Caco-2 (cell line): ENCODE measurements at regions of chr1 and their contacts with region 1.

Region 1: DNA sequence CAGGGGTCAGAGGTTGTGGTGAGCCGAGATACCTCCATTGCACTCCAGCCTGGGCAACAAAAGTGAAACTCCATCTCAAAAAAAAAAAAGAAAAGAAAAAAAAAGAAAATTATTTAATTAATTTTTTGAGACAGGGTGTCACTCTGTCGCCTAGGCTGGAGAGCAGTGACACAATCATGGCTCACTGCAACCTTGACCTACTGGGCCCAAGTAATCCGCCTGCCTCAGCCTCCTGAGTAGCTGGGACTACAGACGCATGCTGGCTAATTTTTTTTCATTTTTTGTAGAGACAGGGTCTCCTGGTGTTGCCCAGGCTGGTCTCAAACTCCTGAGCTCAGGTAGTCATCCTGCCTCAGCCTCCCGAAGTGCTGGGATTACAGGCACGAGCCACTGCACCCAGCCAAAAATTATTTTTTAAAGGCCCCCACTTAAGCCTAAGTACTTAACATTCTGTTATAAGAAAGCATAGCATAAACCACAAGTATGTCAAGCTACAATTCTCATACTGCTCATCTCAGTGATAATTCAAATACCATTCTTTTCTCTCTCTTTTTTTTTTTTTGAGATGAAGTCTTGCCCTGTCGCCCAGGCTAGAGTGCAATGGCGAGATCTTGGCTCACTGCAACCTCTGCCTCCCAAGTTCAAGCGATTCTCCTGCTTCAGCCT is 19.9 kb downstream of the NUCKS1 start:
- DNase-seq: no peak
- H3K4me3 ChIP-seq: no peak overlapping the region
- H3K4me3 Mint-ChIP-seq: no peak overlapping the region
- H3K27ac Mint-ChIP-seq: no peak overlapping the region
- H3K4me1 ChIP-seq: no peaks in the 10 kb centered on the region; the same call in 1 of the 2 replicates
- H3K4me1 Mint-ChIP-seq: peaks cover 7% of the 10 kb centered on the region
- H3K27me3 ChIP-seq: no peaks in the 10 kb centered on the region
- H3K27me3 Mint-ChIP-seq: no peaks in the 10 kb centered on the region
- CTCF ChIP-seq: no peak

Region 2: DNA sequence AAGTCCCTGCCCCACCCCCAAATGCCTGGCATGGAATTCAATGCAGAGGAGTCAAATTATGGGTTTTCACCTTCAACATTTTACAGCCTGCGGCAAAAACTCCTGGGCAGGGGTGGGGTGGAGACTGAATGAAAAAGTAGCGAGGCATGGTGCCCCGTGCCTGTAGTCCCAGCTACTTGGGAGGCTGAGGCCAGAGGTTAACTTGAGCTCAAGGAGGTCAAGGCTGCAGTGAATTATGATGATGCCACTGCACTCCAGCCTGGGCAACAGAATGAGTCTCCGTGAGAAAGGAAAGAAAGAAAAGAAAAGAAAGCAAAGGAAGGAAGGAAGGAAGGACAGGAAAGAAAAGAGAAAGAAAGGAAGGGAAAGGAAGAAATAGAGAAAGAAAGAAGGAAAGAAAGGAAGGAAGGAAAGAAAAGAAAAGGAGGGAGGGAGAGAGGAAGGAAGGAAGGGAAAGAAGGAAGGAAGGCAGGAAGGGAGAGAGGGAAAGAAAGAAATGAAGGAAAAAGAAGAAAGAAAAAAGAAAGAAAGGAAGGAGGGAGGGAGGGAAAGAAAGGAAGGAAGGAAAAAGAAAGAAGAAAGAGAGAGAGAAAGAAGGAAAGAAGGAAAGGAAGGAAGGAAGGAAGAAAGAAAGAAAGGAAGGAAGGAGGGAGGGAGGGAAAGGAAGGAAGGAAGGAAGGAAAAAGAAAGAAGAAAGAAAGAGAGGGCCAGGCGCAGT is 319.3 kb before region 1 on chr1:
- CTCF ChIA-PET with region 1: no interaction called
- POLR2A ChIA-PET with region 1: no interaction called
- intact Hi-C with region 1: no loop called
- DNase-seq: no peak
- H3K4me3 ChIP-seq: no peak overlapping the region
- H3K4me3 Mint-ChIP-seq: no peak overlapping the region
- H3K27ac Mint-ChIP-seq: no peak overlapping the region
- H3K4me1 ChIP-seq: no peaks in the 10 kb centered on the region
- H3K4me1 Mint-ChIP-seq: no peaks in the 10 kb centered on the region
- H3K27me3 ChIP-seq: no peaks in the 10 kb centered on the region
- H3K27me3 Mint-ChIP-seq: peaks cover 24% of the 10 kb centered on the region
- CTCF ChIP-seq: no peak

Region 3: GRCh38 chr1:205692423-205693113 is 37.5 kb before region 1 on chr1:
- CTCF ChIA-PET with region 1: no interaction called
- POLR2A ChIA-PET with region 1: interaction called, 11 read pairs
- intact Hi-C with region 1: no loop called
- DNase-seq: no peak
- H3K4me3 ChIP-seq: no peak overlapping the region
- H3K4me3 Mint-ChIP-seq: no peak overlapping the region
- H3K27ac Mint-ChIP-seq: no peak overlapping the region
- H3K4me1 ChIP-seq: peaks cover 3% of the 10 kb centered on the region; the same call in 1 of the 2 replicates
- H3K4me1 Mint-ChIP-seq: peaks cover 7% of the 10 kb centered on the region
- H3K27me3 ChIP-seq: no peaks in the 10 kb centered on the region
- H3K27me3 Mint-ChIP-seq: no peaks in the 10 kb centered on the region
- CTCF ChIP-seq: no peak

Region 4: DNA sequence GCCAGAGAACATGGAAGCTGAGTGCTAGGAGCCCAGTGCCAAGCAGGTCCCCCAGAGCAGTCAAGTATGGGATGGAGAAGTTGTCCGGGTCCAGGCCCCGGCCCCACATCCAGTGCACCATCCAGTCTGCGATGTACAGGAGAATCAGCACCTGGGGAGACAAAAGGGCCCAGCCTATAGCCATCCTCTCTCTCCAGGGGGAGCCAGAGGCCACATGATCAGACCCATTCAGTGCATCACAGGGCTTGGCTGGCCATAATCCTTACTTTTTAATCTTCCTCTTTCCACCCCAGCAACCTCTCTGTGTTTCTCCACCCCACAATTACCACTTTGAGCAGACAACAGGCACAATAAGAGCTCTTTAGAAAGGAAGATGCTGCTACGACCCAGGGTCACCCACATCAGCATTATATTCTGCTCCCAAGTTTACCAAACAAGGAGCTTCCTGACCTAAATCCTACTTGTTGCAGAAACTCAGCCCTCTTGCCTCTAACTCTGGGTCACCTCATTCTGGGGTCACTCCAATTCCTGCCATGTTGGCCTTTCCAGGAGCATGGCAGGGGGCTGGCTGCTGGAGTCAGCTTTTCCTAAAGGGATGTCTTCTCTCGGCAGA is 61.6 kb after region 1 on chr1:
- CTCF ChIA-PET with region 1: no interaction called
- POLR2A ChIA-PET with region 1: no interaction called
- intact Hi-C with region 1: no loop called
- DNase-seq: peak; percentile 56 to 75
- H3K4me3 ChIP-seq: no peak overlapping the region
- H3K4me3 Mint-ChIP-seq: no peak overlapping the region
- H3K27ac Mint-ChIP-seq: no peak overlapping the region
- H3K4me1 ChIP-seq: no peaks in the 10 kb centered on the region
- H3K4me1 Mint-ChIP-seq: no peaks in the 10 kb centered on the region
- H3K27me3 ChIP-seq: no peaks in the 10 kb centered on the region
- H3K27me3 Mint-ChIP-seq: no peaks in the 10 kb centered on the region
- CTCF ChIP-seq: peak; percentile 90